ACHN (cell line): ENCODE measurements at regions of chr11 and their contacts with region 1.

Region 1: DNA sequence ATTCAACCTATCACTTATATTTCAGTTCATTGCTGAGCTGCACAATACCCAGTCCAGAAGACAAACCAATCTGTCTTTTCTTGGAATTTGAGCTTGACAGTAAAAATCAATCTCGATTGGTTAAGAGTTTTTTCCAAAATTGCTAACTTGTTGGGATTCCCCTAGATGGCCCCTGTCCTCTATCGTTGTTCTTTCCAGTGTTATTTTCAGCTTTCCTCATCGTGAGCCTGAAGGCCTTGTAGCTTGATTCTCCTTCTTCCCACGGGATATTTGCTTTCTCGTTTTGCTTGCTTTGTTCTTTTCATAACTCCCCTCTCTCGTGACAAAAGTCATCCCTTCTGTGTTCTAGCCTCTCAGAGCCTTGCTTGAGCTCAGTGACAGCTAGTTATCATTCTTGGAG is 3.1 kb downstream of the OR8B8 start:
- DNase-seq: no peak

Region 2: GRCh38 chr11:124256076-124256475 is 186.4 kb before region 1 on chr11 and contains the start of gene OR8G5:
- in situ Hi-C with region 1: no loop called
- DNase-seq: no peak

Region 3: GRCh38 chr11:124586238-124586860 is 143.9 kb after region 1 on chr11:
- in situ Hi-C with region 1: loop called (anchors 25 kb)
- DNase-seq: peak; percentile 55